ENCODE measurements at regions of chr7 and their contacts with region 1.

Region 1: DNA sequence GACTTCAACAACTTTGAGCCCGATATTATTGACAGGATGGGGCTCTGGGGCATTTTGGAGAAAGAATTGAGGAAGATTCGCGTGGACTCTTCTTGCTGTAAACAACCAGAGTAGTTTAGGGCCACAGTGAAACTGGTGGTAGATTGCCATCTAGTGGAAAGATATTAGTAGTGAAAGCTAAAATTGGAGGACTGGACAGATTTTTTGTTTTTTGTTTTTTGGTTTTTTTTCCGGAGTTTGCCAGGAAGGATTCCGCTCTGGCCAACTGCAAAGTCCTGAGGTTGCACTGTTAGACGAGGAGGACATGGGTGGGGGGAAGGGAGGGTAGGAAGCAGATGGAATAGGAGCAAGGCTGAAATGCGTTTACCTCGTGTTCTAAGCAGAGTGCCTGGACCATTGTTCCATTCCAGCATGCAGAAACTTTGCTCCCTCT is 11.7 kb downstream of the NOBOX start:
- DNase-seq: no peak
- ATAC-seq: peak; percentile 92
- H3K4me3 ChIP-seq: no peak overlapping the region
- H3K27ac ChIP-seq: no peak overlapping the region
- H3K4me1 ChIP-seq: no peaks in the 10 kb centered on the region
- H3K27me3 ChIP-seq: no peaks in the 10 kb centered on the region
- CTCF ChIP-seq: peak; percentile 56 to 75 (median 71)
- EP300 ChIP-seq: no peak
- POLR2A ChIP-seq: no peak
- RAD21 ChIP-seq: peak; percentile 98

Region 2: DNA sequence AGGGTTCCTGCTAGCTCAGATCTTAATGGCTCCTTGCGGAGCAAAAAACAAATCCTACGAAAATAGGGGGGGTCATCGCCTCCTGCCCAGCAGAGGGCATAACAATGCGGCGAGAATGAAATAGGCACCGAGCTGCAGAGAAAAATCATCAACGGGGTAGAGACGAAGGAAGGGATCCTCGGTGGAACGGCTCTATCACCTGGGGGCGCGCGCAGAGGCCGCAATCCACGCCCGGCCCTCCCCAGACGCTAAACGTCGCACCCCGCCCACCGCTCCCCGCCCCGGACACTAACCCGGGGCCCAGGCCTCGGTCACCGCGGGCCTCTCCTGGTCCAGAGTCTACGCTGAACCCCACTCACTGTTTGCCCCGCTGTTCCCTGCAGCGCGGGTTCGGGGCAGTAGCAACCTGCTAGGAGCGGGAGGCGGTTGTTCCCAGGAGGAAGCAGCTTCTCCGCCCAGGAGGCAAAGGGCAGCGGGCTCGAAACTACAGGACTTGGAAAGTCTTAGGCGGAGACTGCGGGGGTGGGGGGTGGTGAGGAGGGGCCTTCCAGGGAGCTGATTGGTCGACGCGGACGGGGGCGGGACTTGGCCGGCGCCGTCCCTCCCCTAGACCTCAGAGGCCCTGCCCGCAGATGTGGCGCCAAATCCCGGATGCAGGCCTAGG is 490.0 kb before region 1 on chr7 and contains the start of gene TCAF1:
- CTCF ChIA-PET with region 1: no interaction called
- POLR2A ChIA-PET with region 1: no interaction called
- RAD21 ChIA-PET with region 1: no interaction called
- SMC1A ChIA-PET with region 1: no interaction called
- in situ Hi-C with region 1: loop called (anchors 25 kb)
- intact Hi-C with region 1: no loop called
- DNase-seq: peak; percentile 55
- ATAC-seq: peak; percentile 96
- H3K4me3 ChIP-seq: peak within 1 kb of the TSS; percentile 87
- H3K27ac ChIP-seq: peak within 1 kb of the TSS; percentile 86
- H3K4me1 ChIP-seq: no peaks in the 10 kb centered on the region
- H3K27me3 ChIP-seq: no peaks in the 10 kb centered on the region
- CTCF ChIP-seq: peak; percentile 25 to 40 (median 38); a peak in 5 of 6 replicates
- EP300 ChIP-seq: no peak
- POLR2A ChIP-seq: peak; percentile 81
- RAD21 ChIP-seq: peak; percentile 32
- polyA plus RNA-seq, gene TCAF1: 2.2 to 3.2 TPM

Region 3: GRCh38 chr7:144174613-144175012 is 217.2 kb before region 1 on chr7:
- CTCF ChIA-PET with region 1: interaction called, 14 read pairs
- POLR2A ChIA-PET with region 1: no interaction called
- RAD21 ChIA-PET with region 1: no interaction called
- SMC1A ChIA-PET with region 1: interaction called, 3 read pairs
- in situ Hi-C with region 1: no loop called
- intact Hi-C with region 1: loop called (anchors 5 kb)
- DNase-seq: no peak
- ATAC-seq: no peak
- H3K4me3 ChIP-seq: no peak overlapping the region
- H3K27ac ChIP-seq: no peak overlapping the region
- H3K4me1 ChIP-seq: no peaks in the 10 kb centered on the region
- H3K27me3 ChIP-seq: no peaks in the 10 kb centered on the region
- CTCF ChIP-seq: no peak
- EP300 ChIP-seq: no peak
- POLR2A ChIP-seq: no peak
- RAD21 ChIP-seq: no peak

Region 4: GRCh38 chr7:144437370-144438191 is 45.7 kb after region 1 on chr7:
- CTCF ChIA-PET with region 1: interaction called, 12 read pairs
- POLR2A ChIA-PET with region 1: no interaction called
- RAD21 ChIA-PET with region 1: interaction called, 6 read pairs
- SMC1A ChIA-PET with region 1: interaction called, 5 read pairs
- in situ Hi-C with region 1: no loop called
- intact Hi-C with region 1: loop called (anchors 5 kb)
- DNase-seq: peak; percentile 11
- ATAC-seq: peak; percentile 92
- H3K4me3 ChIP-seq: no peak overlapping the region
- H3K27ac ChIP-seq: no peak overlapping the region
- H3K4me1 ChIP-seq: no peaks in the 10 kb centered on the region
- H3K27me3 ChIP-seq: no peaks in the 10 kb centered on the region
- CTCF ChIP-seq: peak; percentile 44 to 60 (median 60); a peak in 5 of 6 replicates
- EP300 ChIP-seq: no peak
- POLR2A ChIP-seq: no peak
- RAD21 ChIP-seq: peak; percentile 68

Measured in GM12878 (cell line).